ENCODE measurements at regions of chr5 and their contacts with region 1.

Region 1: GRCh38 chr5:42950440-42951292 is 89.5 kb downstream of the ANXA2R start:
- DNase-seq: peak; percentile 85
- H3K4me3 ChIP-seq: peak overlapping the region; percentile 29 to 39
- H3K27ac ChIP-seq: peak overlapping the region; percentile 79 to 84
- H3K4me1 ChIP-seq: no peaks in the 10 kb centered on the region
- H3K27me3 ChIP-seq: peaks cover 18% of the 10 kb centered on the region
- CTCF ChIP-seq: peak in 1 of 4 experiments; percentile 10
- POLR2A ChIP-seq: peak; percentile 26

Region 2: DNA sequence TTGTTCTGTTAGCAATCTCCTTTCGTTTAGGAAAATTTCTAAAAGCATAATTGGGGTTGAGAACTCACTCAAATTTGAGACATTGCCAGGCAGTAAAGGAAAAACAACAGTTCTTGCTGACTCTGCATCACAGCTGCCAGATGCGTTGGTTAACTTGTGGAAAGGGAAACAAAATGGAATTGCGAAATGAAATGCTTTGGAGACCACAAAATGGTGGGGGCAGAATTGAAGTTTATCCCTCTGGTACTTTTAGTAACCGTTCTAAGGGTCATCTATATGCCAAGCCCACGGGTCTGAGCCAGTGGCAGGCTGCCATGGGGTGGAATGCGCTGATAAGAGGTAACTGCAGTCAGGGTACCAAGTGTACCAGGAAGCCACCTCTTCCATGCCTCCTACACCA is 110.4 kb before region 1 on chr5:
- intact Hi-C with region 1: no loop called
- DNase-seq: peak; percentile 53
- H3K4me3 ChIP-seq: no peak overlapping the region
- H3K27ac ChIP-seq: peak overlapping the region in 1 of 2 donors; percentile 1
- H3K4me1 ChIP-seq: no peaks in the 10 kb centered on the region
- H3K27me3 ChIP-seq: no peaks in the 10 kb centered on the region
- CTCF ChIP-seq: no peak
- POLR2A ChIP-seq: no peak

Region 3: GRCh38 chr5:43000111-43000845 is 49.6 kb after region 1 on chr5:
- intact Hi-C with region 1: loop called (anchors 5 kb)
- DNase-seq: peak; percentile 49
- H3K4me3 ChIP-seq: peak overlapping the region; percentile 22 to 26
- H3K27ac ChIP-seq: peak overlapping the region; percentile 69 to 75
- H3K4me1 ChIP-seq: no peaks in the 10 kb centered on the region
- H3K27me3 ChIP-seq: no peaks in the 10 kb centered on the region
- CTCF ChIP-seq: no peak
- POLR2A ChIP-seq: no peak

Region 4: GRCh38 chr5:43110606-43111442 is 160.2 kb after region 1 on chr5:
- intact Hi-C with region 1: no loop called
- DNase-seq: no peak
- H3K4me3 ChIP-seq: no peak overlapping the region
- H3K27ac ChIP-seq: no peak overlapping the region
- H3K4me1 ChIP-seq: no peaks in the 10 kb centered on the region
- H3K27me3 ChIP-seq: no peaks in the 10 kb centered on the region
- CTCF ChIP-seq: peak in 1 of 4 experiments; percentile 10
- POLR2A ChIP-seq: no peak